ENCODE measurements at regions of chr6 and their contacts with region 1.

Region 1: DNA sequence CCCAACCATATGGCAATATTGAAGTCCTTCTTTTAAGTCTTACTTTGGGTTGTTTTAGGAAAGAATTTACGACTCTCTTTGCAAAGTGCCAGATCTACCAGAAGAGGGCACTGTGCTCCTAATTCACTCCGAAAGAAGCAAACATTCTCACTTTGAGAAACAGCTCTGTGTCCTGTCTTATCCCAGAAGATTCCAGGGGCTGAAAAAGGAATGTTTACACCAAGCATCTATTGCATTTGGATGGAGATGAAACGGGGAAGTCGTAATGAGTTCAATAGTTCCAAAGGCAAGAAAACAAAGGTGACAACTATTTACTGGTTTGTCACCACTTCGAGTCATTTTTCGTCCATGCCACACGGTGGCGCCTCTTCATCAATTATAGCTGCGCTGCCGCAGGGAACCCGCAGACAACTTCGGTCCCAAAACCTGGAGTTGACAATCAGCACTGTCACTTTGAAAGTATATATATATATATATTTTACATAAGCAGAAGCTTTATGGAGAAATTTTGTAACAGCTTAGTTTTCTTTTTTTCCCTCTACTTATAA is 121.6 kb downstream of the MOXD1 start:
- DNase-seq: peak; percentile 78
- ATAC-seq: peak; percentile 93
- H3K4me3 ChIP-seq: peak overlapping the region; percentile 35 to 70 (median 63); a peak in 4 of 6 replicates
- H3K27ac ChIP-seq: no peak overlapping the region
- H3K4me1 ChIP-seq: no peaks in the 10 kb centered on the region
- H3K27me3 ChIP-seq: peaks cover 3 to 20% of the 10 kb centered on the region in 2 experiments; a peak in 3 of 5 replicates
- CTCF ChIP-seq: peak; percentile 90
- EP300 ChIP-seq: no peak
- POLR2A ChIP-seq: no peak
- RAD21 ChIP-seq: peak; percentile 89

Region 2: DNA sequence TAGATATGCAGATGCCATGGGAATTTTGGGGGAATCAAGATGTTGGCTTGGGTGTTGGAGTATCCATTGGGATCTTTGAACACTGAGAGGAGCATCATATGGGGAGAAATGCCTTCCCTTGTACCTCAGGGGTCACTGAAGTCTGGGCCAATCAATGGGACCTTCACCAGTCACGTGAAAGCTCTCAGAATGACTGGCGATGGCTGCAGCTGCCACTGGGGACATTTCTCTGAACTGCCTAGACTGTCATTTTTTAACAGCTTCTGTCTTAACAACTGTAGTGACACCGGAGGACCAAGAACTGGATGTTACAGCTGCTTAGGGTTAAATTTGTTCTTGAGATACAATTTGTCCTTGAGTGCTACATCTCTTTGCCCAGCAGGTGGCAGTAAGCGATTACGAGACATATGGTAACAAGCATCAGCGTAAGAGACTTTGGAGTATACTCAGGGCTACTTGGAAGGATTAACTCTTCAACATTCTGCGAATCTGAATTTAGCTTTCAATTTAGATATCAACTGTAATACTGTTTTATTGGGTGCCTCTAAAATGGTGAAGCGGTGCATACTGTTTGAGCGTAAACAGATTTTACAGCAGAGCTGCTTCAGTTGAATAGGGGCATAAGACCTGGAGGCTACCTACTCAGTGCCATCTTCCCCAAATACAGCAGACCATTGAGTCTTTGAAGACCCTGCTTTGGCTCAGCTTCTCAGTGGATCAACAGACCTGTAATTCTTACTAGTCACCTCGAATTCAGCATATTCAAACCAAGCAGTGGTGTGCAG is 364.5 kb before region 1 on chr6:
- CTCF ChIA-PET with region 1: interaction called, 5 read pairs
- POLR2A ChIA-PET with region 1: no interaction called
- in situ Hi-C with region 1: no loop called
- intact Hi-C with region 1: loop called (anchors 5 kb)
- DNase-seq: peak; percentile 69
- ATAC-seq: peak; percentile 78
- H3K4me3 ChIP-seq: peak overlapping the region in 1 of 3 experiments; percentile 17; a peak in 1 of 6 replicates
- H3K27ac ChIP-seq: no peak overlapping the region
- H3K4me1 ChIP-seq: peaks cover 23% of the 10 kb centered on the region; the same call in 1 of the 2 replicates
- H3K27me3 ChIP-seq: no peaks in the 10 kb centered on the region
- CTCF ChIP-seq: peak; percentile 90
- EP300 ChIP-seq: no peak
- POLR2A ChIP-seq: no peak
- RAD21 ChIP-seq: peak; percentile 77

Region 3: DNA sequence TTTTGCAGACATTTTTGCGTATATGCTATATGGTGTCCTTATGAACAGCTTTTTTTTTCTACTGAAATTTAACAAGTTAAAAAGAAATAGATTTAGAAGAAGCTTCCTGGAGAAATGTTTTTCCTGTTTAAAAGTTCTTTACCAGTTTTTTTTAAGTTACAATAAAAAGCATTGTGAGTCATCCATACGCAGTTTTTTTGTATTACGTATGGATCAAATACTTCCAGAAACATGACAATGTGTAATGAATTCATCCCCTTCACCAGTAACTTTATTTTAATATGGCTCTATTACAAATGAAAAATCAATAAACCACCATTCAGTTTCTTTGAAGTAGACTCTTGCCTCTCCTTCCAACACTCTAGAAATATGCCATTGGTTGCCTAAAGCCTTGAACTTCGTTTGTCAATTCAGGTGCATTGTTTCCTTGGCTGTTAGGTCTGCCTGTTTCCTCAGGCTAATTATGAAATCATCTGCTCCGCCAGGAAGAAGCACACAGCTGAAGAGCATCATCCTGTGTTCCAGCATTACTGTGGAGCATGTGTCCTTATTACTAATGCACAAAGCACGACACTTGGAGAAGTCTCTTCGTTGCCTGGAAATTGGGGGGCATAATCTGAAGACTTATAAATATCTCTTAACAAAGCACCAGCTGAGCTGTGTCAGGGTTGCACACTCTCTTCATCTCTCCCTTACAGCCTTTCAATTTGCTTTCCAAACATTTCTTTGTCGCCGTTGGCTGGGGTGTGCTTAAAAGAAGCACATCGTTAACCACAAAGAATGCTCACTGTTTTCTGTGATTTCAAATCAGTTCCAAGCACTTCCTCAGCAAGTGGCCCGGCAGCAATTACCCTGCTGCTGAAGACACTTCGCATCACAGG is 112.0 kb after region 1 on chr6:
- CTCF ChIA-PET with region 1: interaction called, 14 read pairs
- POLR2A ChIA-PET with region 1: no interaction called
- in situ Hi-C with region 1: no loop called
- intact Hi-C with region 1: loop called (anchors 1 kb)
- DNase-seq: no peak
- ATAC-seq: no peak
- H3K4me3 ChIP-seq: no peak overlapping the region
- H3K27ac ChIP-seq: no peak overlapping the region
- H3K4me1 ChIP-seq: no peaks in the 10 kb centered on the region
- H3K27me3 ChIP-seq: no peaks in the 10 kb centered on the region; a peak in 1 of 5 replicates
- CTCF ChIP-seq: no peak
- EP300 ChIP-seq: no peak
- POLR2A ChIP-seq: no peak
- RAD21 ChIP-seq: no peak

Region 4: DNA sequence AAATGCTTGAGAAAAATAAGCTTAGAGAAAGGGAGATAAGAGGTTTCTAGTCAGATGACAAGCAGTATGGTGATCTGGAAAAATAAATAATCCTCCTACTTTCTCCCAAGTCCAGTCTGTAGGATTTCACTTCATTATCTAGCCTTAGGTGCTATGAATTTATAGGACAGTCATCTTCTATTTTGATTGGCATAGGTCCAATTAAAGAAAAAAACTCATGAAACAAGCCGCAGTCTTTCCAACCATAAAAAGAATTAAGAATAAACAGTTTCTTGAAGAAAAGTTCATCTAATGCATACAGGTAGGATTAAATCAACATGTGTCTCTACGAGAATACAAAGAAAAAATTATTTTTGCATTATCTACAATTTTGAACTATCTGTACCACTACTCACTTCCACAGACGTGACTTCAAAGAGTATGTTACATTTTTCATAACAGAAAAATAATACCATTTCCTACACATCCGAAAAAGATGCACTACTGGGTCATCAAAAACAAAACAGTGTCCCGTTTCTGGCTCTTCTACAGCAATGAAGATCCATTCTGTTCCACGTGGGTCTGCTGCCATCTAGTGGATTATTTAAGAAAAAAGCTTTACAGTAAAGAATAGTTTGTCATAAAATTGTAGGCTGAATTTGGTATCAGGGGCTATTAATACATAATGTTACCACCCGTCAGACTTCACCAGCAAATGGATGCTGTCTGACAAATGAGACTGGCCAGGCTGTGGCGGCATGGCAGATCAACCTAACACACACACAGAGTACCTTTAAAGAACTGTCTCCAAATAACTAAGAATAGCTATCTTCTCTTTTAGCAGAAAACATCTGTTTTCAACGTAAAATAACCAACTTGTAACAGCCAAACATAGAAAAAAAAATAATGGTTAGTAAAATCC is 204.4 kb after region 1 on chr6:
- CTCF ChIA-PET with region 1: interaction called, 88 read pairs
- POLR2A ChIA-PET with region 1: interaction called, 4 read pairs
- in situ Hi-C with region 1: no loop called
- intact Hi-C with region 1: loop called (anchors 1 kb)
- DNase-seq: peak; percentile 75
- ATAC-seq: peak; percentile 88
- H3K4me3 ChIP-seq: no peak overlapping the region
- H3K27ac ChIP-seq: no peak overlapping the region
- H3K4me1 ChIP-seq: no peaks in the 10 kb centered on the region
- H3K27me3 ChIP-seq: no peaks in the 10 kb centered on the region
- CTCF ChIP-seq: peak; percentile 83
- EP300 ChIP-seq: no peak
- POLR2A ChIP-seq: no peak
- RAD21 ChIP-seq: peak; percentile 85

Measured in HepG2 (cell line).